ENCODE measurements at regions of chr13 and their contacts with region 1.

Region 1: GRCh38 chr13:110907951-110908898 is 6.6 kb downstream of the ANKRD10 start:
- DNase-seq: peak; percentile 91
- H3K4me3 Mint-ChIP-seq: no peak overlapping the region
- H3K27ac Mint-ChIP-seq: peak overlapping the region; percentile 79
- H3K4me1 Mint-ChIP-seq: peaks cover 43% of the 10 kb centered on the region
- H3K27me3 Mint-ChIP-seq: no peaks in the 10 kb centered on the region
- CTCF ChIP-seq: no peak

Region 2: GRCh38 chr13:110869805-110870706 is 38.2 kb before region 1 on chr13:
- CTCF ChIA-PET with region 1: interaction called, 3 read pairs
- POLR2A ChIA-PET with region 1: interaction called, 38 read pairs
- intact Hi-C with region 1: no loop called
- DNase-seq: peak; percentile 100
- H3K4me3 Mint-ChIP-seq: peak overlapping the region; percentile 62
- H3K27ac Mint-ChIP-seq: peak overlapping the region; percentile 88
- H3K4me1 Mint-ChIP-seq: peaks cover 12% of the 10 kb centered on the region
- H3K27me3 Mint-ChIP-seq: no peaks in the 10 kb centered on the region
- CTCF ChIP-seq: peak; percentile 13

Region 3: DNA sequence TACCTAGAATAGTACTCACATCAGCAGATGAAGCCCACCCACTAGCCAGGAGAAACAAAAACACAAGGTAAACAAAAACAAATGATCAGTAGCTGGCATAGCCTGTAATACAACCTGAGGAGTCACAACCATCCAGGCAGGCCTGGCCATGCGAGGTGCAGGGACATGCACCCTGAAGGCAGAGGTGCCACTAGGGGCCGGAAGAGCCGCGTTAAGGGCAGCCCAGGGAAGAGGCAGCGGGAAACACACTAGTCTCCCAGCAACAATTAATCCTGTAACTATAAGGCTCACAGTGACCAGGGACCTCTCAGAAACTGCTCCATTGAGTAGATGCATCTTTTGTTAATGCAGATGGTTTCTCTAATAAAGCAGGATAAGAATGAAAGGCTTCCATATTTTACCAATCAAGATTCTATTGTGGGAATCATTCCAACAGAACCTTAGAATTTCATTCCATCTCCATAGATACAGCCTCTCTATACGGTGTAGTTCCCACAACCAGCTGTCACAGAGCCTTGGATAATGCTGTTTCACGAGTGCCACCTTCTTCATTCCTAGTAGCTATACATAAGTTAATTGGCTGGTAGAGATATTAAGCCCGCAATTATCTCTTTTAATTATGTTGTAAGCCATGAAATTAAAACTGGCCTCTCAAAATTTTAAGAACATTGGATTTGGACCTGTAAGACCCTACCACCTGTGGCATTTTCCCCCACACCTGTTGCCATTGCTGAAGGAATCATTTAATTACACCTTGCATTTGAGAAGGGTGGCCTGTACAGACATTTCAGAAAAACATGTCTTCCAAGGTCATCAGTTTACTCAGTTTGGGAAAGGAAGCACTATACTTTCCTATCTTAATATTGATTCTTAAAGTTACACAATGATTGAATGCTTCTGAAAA is 22.0 kb before region 1 on chr13:
- CTCF ChIA-PET with region 1: no interaction called
- POLR2A ChIA-PET with region 1: no interaction called
- intact Hi-C with region 1: no loop called
- DNase-seq: no peak
- H3K4me3 Mint-ChIP-seq: no peak overlapping the region
- H3K27ac Mint-ChIP-seq: no peak overlapping the region
- H3K4me1 Mint-ChIP-seq: no peaks in the 10 kb centered on the region
- H3K27me3 Mint-ChIP-seq: no peaks in the 10 kb centered on the region
- CTCF ChIP-seq: no peak

Region 4: GRCh38 chr13:111011899-111012298 is 103.7 kb after region 1 on chr13:
- CTCF ChIA-PET with region 1: no interaction called
- POLR2A ChIA-PET with region 1: no interaction called
- intact Hi-C with region 1: no loop called
- DNase-seq: no peak
- H3K4me3 Mint-ChIP-seq: no peak overlapping the region
- H3K27ac Mint-ChIP-seq: no peak overlapping the region
- H3K4me1 Mint-ChIP-seq: no peaks in the 10 kb centered on the region
- H3K27me3 Mint-ChIP-seq: no peaks in the 10 kb centered on the region
- CTCF ChIP-seq: no peak

Measured in MCF 10A (cell line).